PC-9 (cell line): ENCODE measurements at regions of chr1 and their contacts with region 1.

Region 1: GRCh38 chr1:20696397-20697329 is 21.1 kb downstream of the KIF17 start:
- DNase-seq: peak; percentile 67 to 90
- H3K4me3 ChIP-seq: peak overlapping the region; percentile 65; the same call in 1 of the 2 replicates
- H3K27ac ChIP-seq: peak overlapping the region; percentile 53; the same call in 1 of the 2 replicates
- H3K4me1 ChIP-seq: peaks cover 5% of the 10 kb centered on the region; the same call in 1 of the 2 replicates
- H3K27me3 ChIP-seq: no peaks in the 10 kb centered on the region
- CTCF ChIP-seq: peak; percentile 84

Region 2: DNA sequence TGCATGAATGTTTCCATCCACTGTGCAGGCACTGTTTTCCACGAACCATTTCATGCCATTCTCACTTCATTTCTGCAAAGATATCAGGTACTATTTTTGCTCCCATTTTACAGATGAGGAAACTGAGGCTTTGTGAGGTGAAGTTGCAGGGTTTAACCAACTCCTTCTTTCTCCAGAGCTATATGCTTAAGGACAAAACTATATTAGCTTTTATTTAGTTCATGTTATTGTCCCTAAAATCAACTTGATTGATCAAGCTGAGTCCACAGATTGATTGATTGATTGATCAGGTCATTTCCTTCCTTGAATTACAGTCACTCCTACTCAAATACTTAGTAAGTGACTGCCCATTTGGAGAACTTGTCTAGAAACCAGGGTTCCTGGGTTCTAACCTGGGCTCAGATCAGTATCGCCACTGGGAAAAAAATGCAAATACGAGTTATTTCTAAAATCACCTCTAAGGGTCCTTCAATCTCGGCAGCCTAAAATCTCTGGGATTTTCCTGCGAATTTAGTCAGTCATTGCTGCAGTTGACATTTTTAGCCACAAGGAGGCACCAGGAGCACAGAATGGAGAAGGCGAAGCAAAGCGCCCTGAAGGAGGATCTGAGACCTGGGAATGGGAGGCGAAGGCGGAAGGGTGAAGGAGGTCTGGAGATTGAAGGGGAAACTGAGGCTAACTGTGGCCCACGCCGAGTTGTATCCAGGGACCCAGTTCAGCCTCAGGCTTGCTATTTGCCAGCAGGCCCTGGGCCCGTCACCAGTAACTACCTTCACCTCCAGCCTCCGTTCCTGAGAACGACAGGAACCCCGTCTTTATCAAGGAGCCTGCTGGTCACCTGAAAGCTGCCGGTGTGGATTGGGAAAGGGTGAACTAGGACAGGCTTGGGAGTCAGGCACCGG is 174.5 kb before region 1 on chr1:
- CTCF ChIA-PET with region 1: no interaction called
- POLR2A ChIA-PET with region 1: no interaction called
- intact Hi-C with region 1: no loop called
- DNase-seq: peak; percentile 56 to 76
- H3K4me3 ChIP-seq: no peak overlapping the region
- H3K27ac ChIP-seq: no peak overlapping the region
- H3K4me1 ChIP-seq: no peaks in the 10 kb centered on the region
- H3K27me3 ChIP-seq: no peaks in the 10 kb centered on the region
- CTCF ChIP-seq: peak; percentile 88

Region 3: GRCh38 chr1:20717452-20718342 is 21.0 kb after region 1 on chr1 and contains the start of gene KIF17:
- CTCF ChIA-PET with region 1: no interaction called
- POLR2A ChIA-PET with region 1: interaction called, 30 read pairs
- intact Hi-C with region 1: no loop called
- DNase-seq: peak in 1 of 2 experiments; percentile 76
- H3K4me3 ChIP-seq: peak within 1 kb of the TSS; percentile 42; the same call in 1 of the 2 replicates
- H3K27ac ChIP-seq: no peak within 1 kb of the TSS
- H3K4me1 ChIP-seq: no peaks in the 10 kb centered on the region
- H3K27me3 ChIP-seq: no peaks in the 10 kb centered on the region
- CTCF ChIP-seq: no peak
- total RNA-seq, gene KIF17: 1.2 and 1.7 TPM in 2 replicates

Region 4: DNA sequence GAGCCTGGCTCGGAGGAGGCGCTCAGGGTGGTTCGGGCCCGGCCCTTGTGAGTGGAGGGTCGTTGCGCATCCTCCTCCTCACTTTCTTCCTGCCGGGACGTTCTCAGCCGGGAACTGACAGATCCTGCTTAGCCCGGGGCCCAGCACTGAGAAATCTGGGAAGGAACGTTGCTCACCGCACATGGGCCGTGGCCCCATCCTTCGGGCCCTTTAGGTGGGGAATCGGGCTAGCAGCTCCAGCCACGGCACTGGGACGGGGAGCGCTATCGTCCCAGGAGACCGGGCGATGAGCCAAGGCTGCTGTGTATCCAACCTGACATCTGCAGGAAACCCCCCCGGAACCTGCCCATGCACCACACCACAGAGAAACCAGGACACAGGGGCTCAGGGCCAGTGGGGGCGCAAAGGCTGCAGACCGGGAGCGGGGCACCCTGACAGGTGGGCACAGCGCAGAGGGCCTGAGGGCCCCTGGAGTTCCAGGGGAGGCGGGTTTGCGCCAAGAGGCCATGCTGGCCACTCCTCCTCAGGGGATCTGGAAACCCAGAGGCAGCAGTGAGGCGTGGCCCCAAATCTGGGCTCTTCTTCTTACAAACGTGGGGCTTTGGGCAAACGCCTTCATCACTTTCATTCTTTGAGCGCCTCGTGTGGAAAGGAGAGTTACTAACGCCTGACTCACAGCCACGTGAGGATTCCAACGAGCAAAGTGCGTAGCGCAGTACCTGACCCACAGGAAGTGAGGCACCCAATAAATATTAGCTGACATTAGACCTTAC is 36.1 kb after region 1 on chr1 and contains the start of gene SH2D5:
- CTCF ChIA-PET with region 1: no interaction called
- POLR2A ChIA-PET with region 1: no interaction called
- intact Hi-C with region 1: loop called (anchors 5 kb)
- DNase-seq: peak; percentile 80 to 93
- H3K4me3 ChIP-seq: peak within 1 kb of the TSS; percentile 58
- H3K27ac ChIP-seq: peak within 1 kb of the TSS; percentile 68
- H3K4me1 ChIP-seq: peaks cover 12% of the 10 kb centered on the region
- H3K27me3 ChIP-seq: no peaks in the 10 kb centered on the region
- CTCF ChIP-seq: no peak; the same call in 1 of the 2 replicates
- total RNA-seq, gene SH2D5: 1.1 and 1.5 TPM in 2 replicates

Region 5: GRCh38 chr1:21200767-21201166 is 504.1 kb after region 1 on chr1:
- CTCF ChIA-PET with region 1: interaction called, 12 read pairs
- POLR2A ChIA-PET with region 1: no interaction called
- intact Hi-C with region 1: loop called (anchors 1 kb)
- DNase-seq: no peak
- H3K4me3 ChIP-seq: no peak overlapping the region
- H3K27ac ChIP-seq: no peak overlapping the region
- H3K4me1 ChIP-seq: no peaks in the 10 kb centered on the region
- H3K27me3 ChIP-seq: no peaks in the 10 kb centered on the region
- CTCF ChIP-seq: no peak

Region 6: GRCh38 chr1:21255278-21255942 is 558.7 kb after region 1 on chr1:
- CTCF ChIA-PET with region 1: interaction called, 10 read pairs
- POLR2A ChIA-PET with region 1: no interaction called
- intact Hi-C with region 1: no loop called
- DNase-seq: peak; percentile 42 to 75
- H3K4me3 ChIP-seq: no peak overlapping the region
- H3K27ac ChIP-seq: no peak overlapping the region
- H3K4me1 ChIP-seq: peaks cover 20% of the 10 kb centered on the region
- H3K27me3 ChIP-seq: no peaks in the 10 kb centered on the region
- CTCF ChIP-seq: peak; percentile 77

Region 7: GRCh38 chr1:21378705-21379494 is 682.2 kb after region 1 on chr1:
- CTCF ChIA-PET with region 1: interaction called, 10 read pairs
- POLR2A ChIA-PET with region 1: no interaction called
- intact Hi-C with region 1: no loop called
- DNase-seq: peak; percentile 41 to 84
- H3K4me3 ChIP-seq: no peak overlapping the region
- H3K27ac ChIP-seq: peak overlapping the region; percentile 70
- H3K4me1 ChIP-seq: peaks cover 21% of the 10 kb centered on the region
- H3K27me3 ChIP-seq: no peaks in the 10 kb centered on the region
- CTCF ChIP-seq: no peak